ENCODE measurements at regions of chr2 and their contacts with region 1.

Region 1: DNA sequence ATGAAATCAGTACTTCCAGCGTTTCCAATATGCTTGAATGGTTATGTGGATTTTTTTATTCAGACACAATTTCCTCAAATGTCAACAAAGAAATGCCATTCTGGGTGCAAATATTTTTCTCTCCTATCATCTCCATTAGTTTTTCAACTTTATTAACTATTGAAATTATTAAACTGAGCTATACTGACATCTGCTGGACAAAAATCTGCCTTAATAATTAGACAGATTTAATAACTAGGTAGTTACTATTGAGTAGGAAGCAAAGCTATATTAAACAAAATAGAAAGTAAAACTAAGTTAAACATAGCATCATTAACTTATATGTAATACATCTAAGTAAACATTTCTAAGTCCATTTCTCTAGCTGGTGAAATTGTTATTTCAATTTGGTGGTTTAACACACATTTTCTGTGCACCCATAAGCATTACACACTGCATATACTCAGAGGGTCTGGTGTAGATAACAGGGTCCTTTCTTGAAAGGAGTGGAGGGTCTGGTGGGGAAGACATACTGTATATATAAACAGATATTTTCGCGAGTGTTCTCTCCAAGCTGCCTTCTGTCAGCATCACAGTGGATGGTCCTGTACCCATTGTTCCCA is 77.0 kb downstream of the LANCL1 start:
- DNase-seq: no peak
- H3K4me3 ChIP-seq: no peak overlapping the region
- H3K27ac ChIP-seq: no peak overlapping the region
- H3K4me1 ChIP-seq: no peaks in the 10 kb centered on the region
- H3K27me3 ChIP-seq: no peaks in the 10 kb centered on the region
- CTCF ChIP-seq: peak in 2 of 3 experiments; percentile 26 to 55

Region 2: GRCh38 chr2:209984291-209984690 is 415.2 kb before region 1 on chr2:
- intact Hi-C with region 1: loop called (anchors 5 kb)
- DNase-seq: no peak
- H3K4me3 ChIP-seq: no peak overlapping the region
- H3K27ac ChIP-seq: no peak overlapping the region
- H3K4me1 ChIP-seq: no peaks in the 10 kb centered on the region
- H3K27me3 ChIP-seq: no peaks in the 10 kb centered on the region
- CTCF ChIP-seq: no peak

Region 3: DNA sequence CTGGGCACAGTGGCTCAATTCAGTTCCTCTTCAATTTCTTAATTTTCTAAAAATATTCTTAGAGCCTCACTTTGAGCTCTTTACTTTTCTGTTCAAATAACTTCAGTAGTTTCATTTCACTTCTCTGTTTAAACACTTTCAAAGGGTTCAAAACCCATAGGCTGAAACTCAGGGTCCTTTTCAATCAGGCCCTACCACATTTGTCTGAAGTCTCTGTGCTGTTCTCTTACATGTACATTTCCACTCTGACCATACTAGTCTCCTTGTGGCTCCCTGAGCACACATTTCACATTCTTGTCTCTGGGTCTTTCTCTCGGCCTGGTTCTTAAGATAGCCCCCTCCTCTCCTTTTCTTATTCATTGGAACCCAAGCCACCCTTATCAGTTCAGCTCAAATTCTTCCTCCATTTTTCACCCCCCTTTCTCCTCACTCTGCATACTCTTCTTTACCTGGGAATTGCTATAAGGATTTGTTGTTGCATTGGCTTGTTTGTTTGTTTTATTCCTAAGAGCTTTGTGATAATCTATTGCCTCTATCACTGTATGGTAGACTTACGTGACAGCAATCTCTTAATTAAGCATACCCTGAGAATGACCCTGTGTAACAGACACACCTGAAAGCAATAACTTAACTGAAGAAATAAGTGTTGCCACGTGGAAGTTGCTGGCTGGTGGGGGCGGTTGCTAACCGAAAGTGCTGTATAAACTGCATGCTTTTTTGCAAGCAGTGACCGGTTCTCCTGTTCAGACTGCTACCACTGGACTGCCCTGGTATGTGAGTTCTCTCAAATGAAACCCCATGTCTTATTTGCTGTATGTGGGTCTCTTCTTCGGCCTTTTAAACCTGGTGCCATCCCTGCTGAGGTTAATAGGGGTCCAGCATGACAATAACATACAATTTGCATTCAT is 146.6 kb before region 1 on chr2:
- intact Hi-C with region 1: loop called (anchors 1 kb)
- DNase-seq: no peak
- H3K4me3 ChIP-seq: no peak overlapping the region
- H3K27ac ChIP-seq: no peak overlapping the region
- H3K4me1 ChIP-seq: no peaks in the 10 kb centered on the region
- H3K27me3 ChIP-seq: no peaks in the 10 kb centered on the region
- CTCF ChIP-seq: no peak

Region 4: GRCh38 chr2:211068108-211068780 is 668.7 kb after region 1 on chr2:
- intact Hi-C with region 1: no loop called
- DNase-seq: no peak
- H3K4me3 ChIP-seq: no peak overlapping the region
- H3K27ac ChIP-seq: no peak overlapping the region
- H3K4me1 ChIP-seq: no peaks in the 10 kb centered on the region
- H3K27me3 ChIP-seq: no peaks in the 10 kb centered on the region
- CTCF ChIP-seq: no peak